Caco-2 (cell line): ENCODE measurements at regions of chr12 and their contacts with region 1.

Region 1: GRCh38 chr12:55738123-55739024 is 4.5 kb upstream of the GDF11 start:
- DNase-seq: peak; percentile 82 to 84
- H3K4me3 ChIP-seq: peak overlapping the region; percentile 48
- H3K4me3 Mint-ChIP-seq: peak overlapping the region; percentile 77
- H3K27ac Mint-ChIP-seq: peak overlapping the region; percentile 43
- H3K4me1 ChIP-seq: peaks cover 14% of the 10 kb centered on the region
- H3K4me1 Mint-ChIP-seq: peaks cover 28% of the 10 kb centered on the region
- H3K27me3 ChIP-seq: no peaks in the 10 kb centered on the region
- H3K27me3 Mint-ChIP-seq: no peaks in the 10 kb centered on the region
- CTCF ChIP-seq: peak; percentile 70 to 75

Region 2: DNA sequence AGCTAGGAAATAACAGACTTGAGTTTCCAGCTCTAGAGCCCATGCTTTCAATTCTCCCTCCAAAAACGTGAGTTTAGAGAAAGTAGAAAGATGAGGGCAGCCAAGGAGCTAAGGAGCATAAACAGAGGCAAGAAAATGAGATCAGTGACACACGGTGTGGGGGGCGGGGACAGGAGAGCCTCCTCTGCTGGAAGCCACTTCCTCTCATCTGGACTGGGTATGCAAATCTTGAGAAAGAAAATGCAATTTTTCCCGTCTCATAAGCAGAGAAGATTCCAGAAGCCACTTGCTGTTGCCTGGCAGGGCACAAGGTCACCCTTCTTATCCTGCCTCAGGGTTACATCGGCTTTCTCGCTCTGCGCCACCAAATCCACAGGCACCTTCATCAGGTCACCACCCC is 95.7 kb before region 1 on chr12:
- CTCF ChIA-PET with region 1: no interaction called
- POLR2A ChIA-PET with region 1: no interaction called
- intact Hi-C with region 1: no loop called
- DNase-seq: no peak
- H3K4me3 ChIP-seq: no peak overlapping the region
- H3K4me3 Mint-ChIP-seq: no peak overlapping the region
- H3K27ac Mint-ChIP-seq: no peak overlapping the region
- H3K4me1 ChIP-seq: no peaks in the 10 kb centered on the region
- H3K4me1 Mint-ChIP-seq: no peaks in the 10 kb centered on the region
- H3K27me3 ChIP-seq: no peaks in the 10 kb centered on the region
- H3K27me3 Mint-ChIP-seq: peaks cover 3% of the 10 kb centered on the region
- CTCF ChIP-seq: no peak

Region 3: DNA sequence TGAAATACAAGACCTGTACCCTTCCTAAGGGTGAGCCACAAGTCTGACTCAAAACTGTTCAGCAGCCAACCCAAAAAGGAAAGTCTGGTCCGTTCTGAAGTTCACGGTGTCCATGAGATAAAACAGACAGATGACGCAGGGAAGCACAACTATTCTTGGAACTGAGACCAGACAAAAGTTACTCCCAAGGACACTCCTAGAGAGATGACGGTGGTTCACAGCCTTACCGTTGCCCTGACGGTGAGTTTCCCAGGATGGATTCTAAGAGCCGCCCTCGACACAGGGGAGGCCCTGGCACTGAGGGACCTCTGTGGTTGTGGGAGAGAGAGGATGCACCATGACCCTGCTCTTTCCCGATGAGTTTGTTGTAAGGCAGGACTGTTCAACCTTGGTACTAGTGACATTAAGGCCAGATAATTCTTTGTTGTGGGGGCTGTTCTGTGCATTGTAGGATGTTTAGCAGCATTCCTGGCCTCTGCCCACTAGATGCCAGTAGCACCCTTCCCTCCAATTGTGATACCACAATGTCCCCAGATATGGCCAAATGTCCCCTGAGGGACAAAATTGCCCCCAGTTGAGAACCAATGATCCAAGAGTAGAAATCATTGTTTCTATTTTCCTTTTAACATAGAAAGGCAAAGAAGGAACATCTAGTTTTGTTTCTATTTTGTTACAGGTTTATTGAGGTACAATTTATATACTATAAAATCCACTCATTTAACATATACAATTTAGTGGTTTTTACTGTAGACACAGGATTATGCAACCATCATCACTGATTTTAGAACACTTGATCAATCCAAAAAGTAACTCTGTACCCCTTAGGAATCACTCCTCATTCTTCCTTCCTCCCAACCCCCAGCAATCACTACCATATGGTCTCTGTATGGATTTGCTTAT is 78.6 kb before region 1 on chr12:
- CTCF ChIA-PET with region 1: no interaction called
- POLR2A ChIA-PET with region 1: no interaction called
- intact Hi-C with region 1: loop called (anchors 1 kb)
- DNase-seq: peak in 1 of 2 experiments; percentile 29
- H3K4me3 ChIP-seq: no peak overlapping the region
- H3K4me3 Mint-ChIP-seq: no peak overlapping the region
- H3K27ac Mint-ChIP-seq: no peak overlapping the region
- H3K4me1 ChIP-seq: no peaks in the 10 kb centered on the region
- H3K4me1 Mint-ChIP-seq: no peaks in the 10 kb centered on the region
- H3K27me3 ChIP-seq: no peaks in the 10 kb centered on the region
- H3K27me3 Mint-ChIP-seq: no peaks in the 10 kb centered on the region
- CTCF ChIP-seq: peak; percentile 26 to 43

Region 4: GRCh38 chr12:55692631-55693322 is 45.6 kb before region 1 on chr12:
- CTCF ChIA-PET with region 1: no interaction called
- POLR2A ChIA-PET with region 1: no interaction called
- intact Hi-C with region 1: no loop called
- DNase-seq: no peak
- H3K4me3 ChIP-seq: no peak overlapping the region
- H3K4me3 Mint-ChIP-seq: no peak overlapping the region
- H3K27ac Mint-ChIP-seq: no peak overlapping the region
- H3K4me1 ChIP-seq: no peaks in the 10 kb centered on the region
- H3K4me1 Mint-ChIP-seq: no peaks in the 10 kb centered on the region
- H3K27me3 ChIP-seq: no peaks in the 10 kb centered on the region
- H3K27me3 Mint-ChIP-seq: no peaks in the 10 kb centered on the region
- CTCF ChIP-seq: no peak

Region 5: GRCh38 chr12:55777856-55778255 is 39.5 kb after region 1 on chr12:
- CTCF ChIA-PET with region 1: interaction called, 11 read pairs
- POLR2A ChIA-PET with region 1: no interaction called
- intact Hi-C with region 1: no loop called
- DNase-seq: no peak
- H3K4me3 ChIP-seq: no peak overlapping the region
- H3K4me3 Mint-ChIP-seq: no peak overlapping the region
- H3K27ac Mint-ChIP-seq: peak overlapping the region; percentile 50
- H3K4me1 ChIP-seq: peaks cover 21% of the 10 kb centered on the region
- H3K4me1 Mint-ChIP-seq: peaks cover 13% of the 10 kb centered on the region
- H3K27me3 ChIP-seq: no peaks in the 10 kb centered on the region
- H3K27me3 Mint-ChIP-seq: no peaks in the 10 kb centered on the region
- CTCF ChIP-seq: no peak

Region 6: DNA sequence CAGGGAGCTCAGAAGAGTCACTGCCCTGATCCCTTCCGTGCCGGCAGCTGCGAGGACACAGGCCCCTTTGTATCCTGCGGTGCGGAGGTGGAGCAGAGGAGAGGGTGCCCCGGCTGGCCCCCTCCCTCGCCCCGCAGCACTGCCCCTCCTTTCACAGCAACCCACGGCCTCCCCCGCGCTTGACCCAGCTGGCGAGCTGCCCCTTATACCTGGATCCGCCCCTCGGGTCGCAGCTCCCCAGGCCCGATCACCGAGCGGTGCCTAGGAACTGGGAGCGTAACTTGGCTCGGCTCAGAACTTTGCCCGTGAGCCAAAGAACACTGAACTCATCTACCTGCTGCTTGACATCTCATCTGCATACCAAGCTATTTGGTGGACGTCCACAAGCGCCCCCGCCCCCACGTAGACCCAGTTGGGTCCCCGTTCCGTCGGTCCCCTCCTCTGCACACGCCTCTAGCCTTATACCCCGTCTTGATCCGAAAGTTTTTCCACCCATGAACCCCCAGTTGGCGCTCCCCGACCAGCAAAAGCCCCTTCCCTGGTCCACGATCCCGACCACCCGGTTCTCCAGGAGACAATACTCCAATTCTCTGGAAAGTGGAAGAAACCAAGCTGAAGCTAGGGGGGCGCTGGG is 91.7 kb after region 1 on chr12:
- CTCF ChIA-PET with region 1: interaction called, 12 read pairs
- POLR2A ChIA-PET with region 1: interaction called, 4 read pairs
- intact Hi-C with region 1: no loop called
- DNase-seq: peak; percentile 41 to 52
- H3K4me3 ChIP-seq: peak overlapping the region; percentile 76
- H3K4me3 Mint-ChIP-seq: peak overlapping the region; percentile 82
- H3K27ac Mint-ChIP-seq: peak overlapping the region; percentile 85
- H3K4me1 ChIP-seq: no peaks in the 10 kb centered on the region
- H3K4me1 Mint-ChIP-seq: peaks cover 12% of the 10 kb centered on the region
- H3K27me3 ChIP-seq: no peaks in the 10 kb centered on the region
- H3K27me3 Mint-ChIP-seq: no peaks in the 10 kb centered on the region
- CTCF ChIP-seq: no peak

Region 7: GRCh38 chr12:55973598-55974307 is 235.4 kb after region 1 on chr12 and contains the start of gene RAB5B:
- CTCF ChIA-PET with region 1: interaction called, 13 read pairs
- POLR2A ChIA-PET with region 1: no interaction called
- intact Hi-C with region 1: no loop called
- DNase-seq: peak; percentile 98 to 100
- H3K4me3 ChIP-seq: peak within 1 kb of the TSS; percentile 92
- H3K4me3 Mint-ChIP-seq: no peak within 1 kb of the TSS
- H3K27ac Mint-ChIP-seq: no peak within 1 kb of the TSS
- H3K4me1 ChIP-seq: peaks cover 31% of the 10 kb centered on the region
- H3K4me1 Mint-ChIP-seq: peaks cover 16% of the 10 kb centered on the region
- H3K27me3 ChIP-seq: no peaks in the 10 kb centered on the region
- H3K27me3 Mint-ChIP-seq: no peaks in the 10 kb centered on the region
- CTCF ChIP-seq: peak in 1 of 2 experiments; percentile 21
- total RNA-seq, gene RAB5B: 98.4 and 107 TPM in 2 replicates

Region 8: DNA sequence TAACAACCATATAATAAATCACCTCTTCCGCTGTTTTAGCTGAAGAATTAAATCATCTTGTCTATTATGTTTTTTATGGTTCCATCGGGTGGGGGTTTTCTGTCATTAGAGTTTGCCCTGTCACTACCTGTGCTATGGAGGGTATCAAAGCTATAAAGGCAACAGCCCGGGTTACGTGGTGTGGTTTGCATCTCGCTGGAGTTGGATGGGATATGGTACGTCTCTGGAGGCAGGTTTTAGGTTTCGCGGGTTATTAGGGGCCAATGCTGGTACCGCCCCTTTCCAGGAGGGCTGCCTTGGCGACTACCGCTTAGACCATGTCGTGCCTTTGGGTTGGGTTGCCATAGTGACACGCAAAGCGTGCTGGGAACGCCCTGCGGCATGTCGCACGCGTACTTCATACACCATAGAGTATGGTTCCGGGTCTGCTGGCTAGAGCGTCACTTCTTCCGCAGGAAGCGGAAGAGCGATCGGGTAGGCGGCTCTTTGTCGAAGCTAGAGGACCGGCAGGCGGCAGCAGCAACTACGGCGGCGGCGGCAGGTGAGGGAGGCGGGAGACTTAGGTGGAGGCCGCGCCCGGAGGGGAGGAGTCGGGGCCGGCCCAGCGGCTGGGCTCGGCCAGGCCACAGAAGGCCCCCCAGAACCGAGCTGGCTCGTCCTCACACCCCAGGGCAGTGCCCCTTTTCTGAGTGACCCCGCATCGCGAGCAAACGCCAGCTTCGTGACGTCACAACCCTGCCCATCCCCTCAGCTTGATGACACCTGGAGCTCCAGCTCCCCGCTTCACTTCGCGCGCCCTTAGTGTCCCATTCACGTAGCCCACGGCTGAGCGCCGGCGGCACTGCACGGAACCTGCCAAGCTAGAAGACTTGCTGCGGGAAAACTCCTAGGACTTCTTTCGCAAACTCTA is 379.7 kb after region 1 on chr12 and contains the start of gene ZC3H10:
- CTCF ChIA-PET with region 1: interaction called, 4 read pairs
- POLR2A ChIA-PET with region 1: no interaction called
- intact Hi-C with region 1: loop called (anchors 10 kb)
- DNase-seq: peak; percentile 98 to 99
- H3K4me3 ChIP-seq: peak within 1 kb of the TSS; percentile 70
- H3K4me3 Mint-ChIP-seq: peak within 1 kb of the TSS; percentile 97
- H3K27ac Mint-ChIP-seq: peak within 1 kb of the TSS; percentile 100
- H3K4me1 ChIP-seq: peaks cover 18% of the 10 kb centered on the region
- H3K4me1 Mint-ChIP-seq: peaks cover 20% of the 10 kb centered on the region
- H3K27me3 ChIP-seq: no peaks in the 10 kb centered on the region
- H3K27me3 Mint-ChIP-seq: peaks cover 2% of the 10 kb centered on the region
- CTCF ChIP-seq: peak in 1 of 2 experiments; percentile 53
- total RNA-seq, gene ZC3H10: 3.5 and 4.4 TPM in 2 replicates